ENCODE measurements at regions of chr1 and their contacts with region 1.

Region 1: DNA sequence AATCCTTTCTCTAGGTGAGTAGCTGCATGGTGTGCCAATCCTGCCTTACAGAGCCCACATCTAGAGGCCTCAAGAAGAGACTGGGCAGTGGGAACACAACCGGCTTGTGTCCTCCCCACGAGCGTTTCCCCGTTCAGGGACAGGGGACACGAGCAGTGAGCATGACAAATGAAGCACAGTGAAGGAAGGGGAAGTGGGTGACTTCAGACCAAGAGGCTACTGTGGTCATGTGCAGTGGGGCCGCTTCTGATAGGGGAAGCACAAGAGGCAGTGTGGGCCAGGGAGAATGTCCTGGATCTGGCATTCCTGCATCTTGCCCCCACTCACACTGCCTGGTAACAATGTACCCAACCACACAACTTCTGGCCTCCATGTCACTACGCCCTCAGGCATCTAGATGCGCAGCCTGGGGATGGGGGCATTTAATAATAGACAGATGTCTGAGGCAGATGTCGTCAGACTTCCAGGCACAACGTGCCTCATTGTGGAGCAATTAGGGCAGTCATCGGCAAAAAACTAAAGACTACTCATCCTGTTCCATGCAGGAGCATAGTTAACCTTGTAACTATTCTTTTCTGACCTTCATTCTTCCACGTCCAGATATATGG is 155.6 kb upstream of the NBPF11 start:
- DNase-seq: no peak
- ATAC-seq: no peak
- H3K4me3 Mint-ChIP-seq: no peak overlapping the region
- H3K27ac Mint-ChIP-seq: no peak overlapping the region
- H3K4me1 Mint-ChIP-seq: peaks cover 31% of the 10 kb centered on the region
- H3K27me3 Mint-ChIP-seq: peaks cover 14% of the 10 kb centered on the region
- CTCF ChIP-seq: no peak

Region 2: DNA sequence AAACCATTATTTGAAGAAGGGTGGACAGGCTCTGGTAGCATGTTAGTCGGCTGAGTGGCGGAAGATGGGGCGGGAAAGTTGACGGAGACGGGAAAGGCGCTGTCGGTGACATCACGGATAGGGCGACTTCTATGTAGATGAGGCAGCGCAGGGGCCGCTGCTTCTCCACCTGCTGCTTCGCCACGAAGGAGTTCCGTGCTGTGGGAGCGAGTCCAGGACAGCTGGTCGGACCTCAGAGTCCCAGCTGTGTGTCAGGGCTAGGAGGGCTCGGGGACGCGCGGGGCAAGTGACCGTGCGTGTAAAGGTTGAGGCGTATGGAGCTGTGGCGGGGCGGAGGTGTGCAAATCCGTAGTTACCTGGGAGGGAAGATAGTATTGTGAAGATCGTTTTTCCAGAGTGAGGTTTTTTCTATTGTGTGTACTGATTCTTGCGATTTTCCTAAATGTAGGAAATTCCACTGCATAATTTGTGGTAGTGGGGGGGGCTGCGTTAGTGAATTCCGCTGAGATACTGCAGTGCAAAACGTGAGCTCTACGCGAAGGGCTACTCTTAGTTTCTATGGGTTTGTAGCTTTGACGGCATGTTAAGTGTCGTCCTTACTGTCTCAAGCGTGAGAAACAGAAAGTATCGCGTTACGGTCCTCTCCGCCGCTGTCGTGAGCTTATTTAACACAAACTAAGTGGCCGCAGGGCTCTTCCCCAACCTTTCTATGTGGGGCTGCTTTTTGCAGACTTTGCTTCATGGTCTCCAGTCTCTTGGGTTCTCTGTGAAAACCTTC is 44.4 kb before region 1 on chr1:
- CTCF ChIA-PET with region 1: no interaction called
- POLR2A ChIA-PET with region 1: interaction called, 21 read pairs
- intact Hi-C with region 1: loop called (anchors 2 kb)
- DNase-seq: peak; percentile 58
- ATAC-seq: peak; percentile 89
- H3K4me3 Mint-ChIP-seq: peak overlapping the region; percentile 93
- H3K27ac Mint-ChIP-seq: peak overlapping the region; percentile 98
- H3K4me1 Mint-ChIP-seq: peaks cover 14% of the 10 kb centered on the region
- H3K27me3 Mint-ChIP-seq: no peaks in the 10 kb centered on the region
- CTCF ChIP-seq: no peak